ENCODE measurements at regions of chr17 and their contacts with region 1.

Region 1: DNA sequence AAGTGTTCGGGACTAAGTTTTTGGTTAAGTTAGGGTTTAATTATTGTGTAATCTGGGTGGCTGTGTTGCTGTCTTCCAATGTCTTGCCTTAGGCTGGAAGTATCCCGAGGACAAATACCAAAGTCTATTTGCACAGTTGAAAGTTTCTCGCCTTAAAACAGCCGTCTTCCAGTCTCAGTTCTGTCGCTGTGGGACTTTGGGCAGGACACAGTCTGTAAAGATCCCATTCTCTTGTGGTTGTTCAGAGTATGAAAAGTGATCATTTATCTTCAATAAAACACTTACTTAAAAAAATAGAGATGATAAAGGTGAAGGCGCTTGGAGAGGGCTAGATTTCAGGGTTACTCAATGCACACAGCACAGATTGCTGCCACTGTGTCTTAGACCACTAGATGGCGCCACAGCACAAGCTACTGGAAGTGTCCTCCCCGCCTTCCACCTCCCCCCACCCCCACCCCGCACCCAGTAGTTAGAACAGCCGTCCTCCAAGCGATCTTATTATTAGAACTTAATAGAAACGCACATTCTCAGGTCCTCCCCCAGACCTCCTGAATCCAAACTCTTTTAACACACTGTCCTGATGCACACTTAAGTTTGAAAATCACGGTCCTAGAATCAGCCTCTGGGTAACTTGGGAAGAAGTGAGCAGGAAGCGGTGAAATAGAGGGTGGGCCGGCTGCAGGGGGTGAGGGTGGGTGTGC is 45.9 kb downstream of the AKAP1 start:
- DNase-seq: peak; percentile 80 to 89
- ATAC-seq: peak; percentile 90 to 98 (median 94)
- H3K4me3 ChIP-seq: no peak overlapping the region
- H3K27ac ChIP-seq: no peak overlapping the region
- H3K4me1 ChIP-seq: no peaks in the 10 kb centered on the region
- H3K27me3 ChIP-seq: no peaks in the 10 kb centered on the region
- CTCF ChIP-seq: peak; percentile 86

Region 2: GRCh38 chr17:57604771-57605674 is 474.1 kb after region 1 on chr17:
- intact Hi-C with region 1: loop called in 1 of 2 experiments (anchors 10 kb)
- DNase-seq: peak in 1 of 2 donors; percentile 67
- ATAC-seq: peak; percentile 37 to 70 (median 48)
- H3K4me3 ChIP-seq: peak overlapping the region; percentile 22
- H3K27ac ChIP-seq: peak overlapping the region; percentile 83
- H3K4me1 ChIP-seq: peaks cover 40% of the 10 kb centered on the region
- H3K27me3 ChIP-seq: no peaks in the 10 kb centered on the region
- CTCF ChIP-seq: no peak

Region 3: GRCh38 chr17:57671667-57672632 is 541.0 kb after region 1 on chr17:
- intact Hi-C with region 1: loop called in 1 of 2 experiments (anchors 5 kb)
- DNase-seq: peak; percentile 70 to 82
- ATAC-seq: peak; percentile 82 to 92 (median 88)
- H3K4me3 ChIP-seq: no peak overlapping the region
- H3K27ac ChIP-seq: no peak overlapping the region
- H3K4me1 ChIP-seq: no peaks in the 10 kb centered on the region
- H3K27me3 ChIP-seq: no peaks in the 10 kb centered on the region
- CTCF ChIP-seq: peak; percentile 88

Region 4: GRCh38 chr17:57747221-57748017 is 616.5 kb after region 1 on chr17:
- intact Hi-C with region 1: loop called (anchors 2 to 5 kb)
- DNase-seq: no peak
- ATAC-seq: peak; percentile 73 to 92 (median 82)
- H3K4me3 ChIP-seq: no peak overlapping the region
- H3K27ac ChIP-seq: no peak overlapping the region
- H3K4me1 ChIP-seq: no peaks in the 10 kb centered on the region
- H3K27me3 ChIP-seq: no peaks in the 10 kb centered on the region
- CTCF ChIP-seq: peak; percentile 77

Region 5: DNA sequence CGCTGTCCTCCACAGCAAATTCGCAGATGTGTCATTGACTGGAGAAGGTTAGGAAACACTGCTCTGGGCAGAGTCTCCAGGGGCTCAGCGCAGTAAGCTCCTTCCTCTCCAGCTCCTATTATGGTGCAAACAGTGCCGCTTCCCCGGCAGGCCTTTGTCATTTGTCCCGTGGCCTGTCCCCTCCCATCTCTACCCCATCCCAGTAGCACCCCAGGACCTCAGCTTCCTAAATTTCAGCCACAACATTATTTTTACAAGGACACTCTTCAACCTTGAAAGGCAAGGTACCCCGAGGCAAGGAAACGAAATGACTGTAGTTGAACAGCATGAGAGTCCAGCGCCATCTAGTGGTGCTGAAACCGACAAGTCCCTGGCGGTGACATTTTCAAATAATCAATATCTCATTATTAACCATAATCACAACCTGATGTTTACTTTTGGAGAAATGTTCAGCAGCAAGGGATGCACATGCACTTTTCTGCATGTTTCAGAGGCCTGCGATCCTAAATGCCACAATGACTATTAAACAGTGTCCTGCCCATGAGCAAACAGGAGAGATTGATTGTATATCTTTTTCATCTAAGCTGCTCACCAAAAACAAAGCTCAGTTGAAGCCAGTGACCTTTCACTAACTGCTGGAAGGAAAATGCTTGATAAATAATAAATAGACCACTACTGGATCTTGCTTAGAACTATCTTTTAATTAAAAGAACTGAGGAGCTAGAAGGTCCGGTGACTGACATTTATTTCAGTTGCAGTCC is 702.4 kb after region 1 on chr17:
- intact Hi-C with region 1: loop called in 1 of 2 experiments (anchors 5 kb)
- DNase-seq: peak; percentile 67 to 82
- ATAC-seq: peak; percentile 68 to 83 (median 81)
- H3K4me3 ChIP-seq: peak overlapping the region; percentile 60
- H3K27ac ChIP-seq: peak overlapping the region; percentile 68
- H3K4me1 ChIP-seq: peaks cover 38% of the 10 kb centered on the region
- H3K27me3 ChIP-seq: no peaks in the 10 kb centered on the region
- CTCF ChIP-seq: peak; percentile 93

Region 6: GRCh38 chr17:58112970-58113631 is 982.2 kb after region 1 on chr17:
- intact Hi-C with region 1: loop called (anchors 10 kb)
- DNase-seq: peak; percentile 68 to 84
- ATAC-seq: peak; percentile 88 to 97 (median 92)
- H3K4me3 ChIP-seq: no peak overlapping the region
- H3K27ac ChIP-seq: no peak overlapping the region
- H3K4me1 ChIP-seq: no peaks in the 10 kb centered on the region
- H3K27me3 ChIP-seq: peaks cover 0 to 4% (median 0%) of the 10 kb centered on the region in 3 donors
- CTCF ChIP-seq: peak; percentile 94